ENCODE measurements at regions of chr3 and their contacts with region 1.

Region 1: GRCh38 chr3:41198950-41199865 is at the start of gene CTNNB1:
- DNase-seq: peak; percentile 50
- ATAC-seq: peak; percentile 77
- H3K4me3 ChIP-seq: peak within 1 kb of the TSS; percentile 90
- H3K27ac ChIP-seq: peak within 1 kb of the TSS; percentile 93
- H3K4me1 ChIP-seq: no peaks in the 10 kb centered on the region
- H3K27me3 ChIP-seq: no peaks in the 10 kb centered on the region
- CTCF ChIP-seq: peak in 2 of 3 experiments; percentile 3 to 4; a peak in 2 of 6 replicates
- EP300 ChIP-seq: no peak
- POLR2A ChIP-seq: peak; percentile 100
- RAD21 ChIP-seq: no peak
- polyA plus RNA-seq, gene CTNNB1: 30.4 to 36.6 TPM

Region 2: DNA sequence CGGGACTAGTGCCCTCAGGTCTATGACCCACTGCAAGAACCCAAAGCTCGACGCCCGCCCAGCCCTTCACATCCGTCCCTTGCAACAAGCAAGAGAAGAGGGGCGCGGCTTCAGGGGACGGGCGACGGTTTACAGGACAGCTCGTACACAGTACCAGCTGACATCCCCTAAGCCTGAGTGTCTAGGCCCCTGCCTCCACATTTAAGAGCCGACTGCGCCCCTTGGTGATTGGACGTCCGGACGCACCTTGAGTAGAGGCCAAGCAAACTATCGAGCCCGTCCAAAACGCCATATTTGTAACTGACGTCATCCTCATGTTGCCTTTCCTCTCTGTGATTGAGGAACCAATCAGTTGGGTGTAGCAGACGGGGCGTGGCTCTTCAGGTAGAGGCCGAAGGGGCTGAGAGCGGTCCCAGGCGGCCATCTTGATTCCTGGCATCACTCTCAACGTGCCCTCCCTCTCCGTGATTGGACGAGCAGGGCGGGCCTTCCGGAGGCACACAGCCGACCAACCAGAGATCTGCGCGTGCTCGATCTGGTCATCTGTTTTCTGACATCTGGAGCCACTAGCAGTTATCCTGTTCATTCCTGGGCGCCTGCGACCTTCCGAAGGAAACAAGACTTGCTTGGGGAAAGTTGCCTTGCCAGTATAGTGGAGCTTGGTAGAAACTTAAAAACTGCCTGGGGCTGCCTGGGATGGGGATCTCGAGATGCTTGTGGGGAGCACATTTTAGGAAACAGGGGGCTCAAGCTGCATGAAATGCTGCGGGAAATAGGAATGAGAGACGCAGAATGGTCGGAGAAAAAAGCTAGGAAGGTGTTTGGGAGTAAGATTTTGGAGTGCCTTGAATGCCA is 746.1 kb before region 1 on chr3:
- CTCF ChIA-PET with region 1: no interaction called
- POLR2A ChIA-PET with region 1: no interaction called
- RAD21 ChIA-PET with region 1: no interaction called
- SMC1A ChIA-PET with region 1: no interaction called
- in situ Hi-C with region 1: no loop called
- intact Hi-C with region 1: loop called (anchors 5 kb)
- DNase-seq: peak; percentile 93
- ATAC-seq: peak; percentile 95
- H3K4me3 ChIP-seq: peak overlapping the region; percentile 82
- H3K27ac ChIP-seq: peak overlapping the region; percentile 81
- H3K4me1 ChIP-seq: no peaks in the 10 kb centered on the region; the same call in 1 of the 2 replicates
- H3K27me3 ChIP-seq: no peaks in the 10 kb centered on the region
- CTCF ChIP-seq: no peak
- EP300 ChIP-seq: no peak
- POLR2A ChIP-seq: peak; percentile 87
- RAD21 ChIP-seq: no peak

Region 3: DNA sequence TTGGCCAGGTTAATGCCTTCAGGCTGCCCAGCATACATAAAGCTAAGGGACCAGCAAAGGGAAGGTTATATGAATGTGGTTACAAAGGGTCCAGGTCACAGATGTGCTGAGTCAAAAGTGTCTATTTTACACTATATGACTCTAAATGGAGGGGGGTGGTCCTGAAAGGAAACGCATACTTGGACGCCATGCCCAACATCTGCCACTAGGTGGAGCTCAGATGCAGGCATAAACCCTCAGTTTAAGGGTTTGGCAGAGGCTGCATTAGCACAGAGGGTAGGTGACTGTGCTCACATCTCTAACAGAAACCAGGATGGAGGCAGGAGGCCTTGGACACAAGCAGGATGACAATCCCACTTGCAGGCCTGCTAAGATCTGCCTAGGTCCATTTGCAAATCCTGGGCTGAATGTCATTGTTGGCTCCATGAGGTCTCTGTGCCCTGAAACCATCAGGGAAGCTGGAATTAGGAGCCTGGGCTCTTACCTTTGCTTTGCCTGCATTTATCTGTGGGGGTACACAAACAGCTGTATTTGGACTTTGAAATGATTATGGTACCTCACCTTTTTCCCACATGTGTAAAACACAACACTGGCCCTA is 618.6 kb before region 1 on chr3:
- CTCF ChIA-PET with region 1: interaction called, 5 read pairs
- POLR2A ChIA-PET with region 1: no interaction called
- RAD21 ChIA-PET with region 1: no interaction called
- SMC1A ChIA-PET with region 1: no interaction called
- in situ Hi-C with region 1: no loop called
- intact Hi-C with region 1: loop called (anchors 5 kb)
- DNase-seq: no peak
- ATAC-seq: peak; percentile 85
- H3K4me3 ChIP-seq: no peak overlapping the region
- H3K27ac ChIP-seq: no peak overlapping the region
- H3K4me1 ChIP-seq: no peaks in the 10 kb centered on the region
- H3K27me3 ChIP-seq: no peaks in the 10 kb centered on the region; a peak in 2 of 4 replicates
- CTCF ChIP-seq: peak; percentile 91 to 96 (median 93); a peak in 5 of 6 replicates
- EP300 ChIP-seq: no peak
- POLR2A ChIP-seq: no peak
- RAD21 ChIP-seq: peak; percentile 99

Region 4: DNA sequence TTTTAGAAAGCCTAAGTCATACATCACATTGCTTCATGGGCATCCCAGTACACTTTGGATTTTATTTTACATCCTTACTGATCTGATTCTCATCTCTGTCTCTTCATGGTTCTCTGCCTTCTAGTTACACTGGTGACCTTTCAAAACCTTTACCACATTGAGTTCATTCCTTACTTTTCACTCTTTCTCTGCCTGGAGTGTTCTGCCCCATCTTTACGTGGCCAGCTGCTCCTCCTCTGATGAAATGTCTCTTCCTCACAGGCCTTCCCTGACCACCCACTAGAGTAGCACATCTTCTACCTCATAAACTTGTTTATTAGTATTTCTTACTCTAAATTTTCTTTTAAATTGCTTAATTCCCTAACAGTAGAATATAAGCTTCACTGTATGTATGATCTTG is 17.8 kb after region 1 on chr3:
- CTCF ChIA-PET with region 1: interaction called, 13 read pairs
- POLR2A ChIA-PET with region 1: interaction called, 13 read pairs
- RAD21 ChIA-PET with region 1: interaction called, 35 read pairs
- SMC1A ChIA-PET with region 1: interaction called, 18 read pairs
- in situ Hi-C with region 1: no loop called
- intact Hi-C with region 1: no loop called
- DNase-seq: no peak
- ATAC-seq: peak; percentile 12
- H3K4me3 ChIP-seq: no peak overlapping the region
- H3K27ac ChIP-seq: no peak overlapping the region
- H3K4me1 ChIP-seq: peaks cover 3% of the 10 kb centered on the region; the same call in 1 of the 2 replicates
- H3K27me3 ChIP-seq: no peaks in the 10 kb centered on the region
- CTCF ChIP-seq: no peak
- EP300 ChIP-seq: no peak
- POLR2A ChIP-seq: no peak
- RAD21 ChIP-seq: no peak

Region 5: GRCh38 chr3:41881233-41881821 is 682.1 kb after region 1 on chr3:
- CTCF ChIA-PET with region 1: no interaction called
- POLR2A ChIA-PET with region 1: no interaction called
- RAD21 ChIA-PET with region 1: no interaction called
- SMC1A ChIA-PET with region 1: no interaction called
- in situ Hi-C with region 1: no loop called
- intact Hi-C with region 1: loop called (anchors 5 kb)
- DNase-seq: no peak
- ATAC-seq: no peak
- H3K4me3 ChIP-seq: no peak overlapping the region
- H3K27ac ChIP-seq: no peak overlapping the region
- H3K4me1 ChIP-seq: no peaks in the 10 kb centered on the region
- H3K27me3 ChIP-seq: no peaks in the 10 kb centered on the region
- CTCF ChIP-seq: peak; percentile 44 to 58 (median 57); a peak in 5 of 6 replicates
- EP300 ChIP-seq: no peak
- POLR2A ChIP-seq: no peak
- RAD21 ChIP-seq: peak; percentile 81

Measured in GM12878 (cell line).